ENCODE measurements at regions of chr1 and their contacts with region 1.

Region 1: DNA sequence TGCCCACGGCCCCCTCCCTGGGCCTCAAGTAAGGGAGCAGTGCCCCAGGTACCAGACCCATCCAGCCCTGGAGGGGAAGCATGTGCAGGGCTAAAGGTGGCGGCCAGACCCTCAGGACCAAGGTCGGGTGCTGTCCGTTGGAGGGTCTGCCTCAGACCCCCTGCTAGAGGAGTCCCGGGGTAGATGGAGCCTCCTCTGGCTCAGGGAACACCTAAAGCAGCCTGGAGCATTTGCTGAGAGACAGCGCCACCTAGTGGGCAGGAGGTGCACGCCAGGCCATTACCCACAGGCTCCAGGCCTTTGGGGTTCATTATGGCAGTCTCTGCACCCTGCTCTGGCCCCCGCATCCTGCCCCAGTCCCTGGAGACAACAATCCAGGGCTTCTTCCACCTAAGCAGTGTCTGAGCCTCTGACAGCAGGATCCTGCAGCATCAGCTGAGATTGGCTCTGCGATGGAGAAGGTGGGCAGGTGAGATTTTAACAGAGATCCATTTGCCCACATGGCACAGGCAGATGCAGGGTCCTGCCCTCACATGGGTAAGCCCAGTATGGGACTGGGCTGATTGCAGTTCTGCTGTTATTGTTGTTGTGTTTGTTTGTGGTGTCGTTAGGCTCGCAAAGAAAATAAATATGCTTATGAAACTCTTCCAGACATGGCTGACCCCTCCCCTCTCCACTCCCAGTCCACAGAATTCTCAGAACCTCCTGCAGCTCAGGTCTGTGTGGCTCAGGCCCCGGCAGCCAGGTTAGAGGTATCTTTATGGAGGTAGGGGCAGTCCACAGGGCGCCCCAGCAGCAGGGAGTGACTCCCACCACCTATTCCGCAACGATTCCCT is 42.4 kb downstream of the CTNNBIP1 start:
- DNase-seq: peak; percentile 79
- H3K4me3 Mint-ChIP-seq: no peak overlapping the region
- H3K27ac Mint-ChIP-seq: no peak overlapping the region
- H3K4me1 Mint-ChIP-seq: no peaks in the 10 kb centered on the region
- H3K27me3 Mint-ChIP-seq: no peaks in the 10 kb centered on the region

Region 2: DNA sequence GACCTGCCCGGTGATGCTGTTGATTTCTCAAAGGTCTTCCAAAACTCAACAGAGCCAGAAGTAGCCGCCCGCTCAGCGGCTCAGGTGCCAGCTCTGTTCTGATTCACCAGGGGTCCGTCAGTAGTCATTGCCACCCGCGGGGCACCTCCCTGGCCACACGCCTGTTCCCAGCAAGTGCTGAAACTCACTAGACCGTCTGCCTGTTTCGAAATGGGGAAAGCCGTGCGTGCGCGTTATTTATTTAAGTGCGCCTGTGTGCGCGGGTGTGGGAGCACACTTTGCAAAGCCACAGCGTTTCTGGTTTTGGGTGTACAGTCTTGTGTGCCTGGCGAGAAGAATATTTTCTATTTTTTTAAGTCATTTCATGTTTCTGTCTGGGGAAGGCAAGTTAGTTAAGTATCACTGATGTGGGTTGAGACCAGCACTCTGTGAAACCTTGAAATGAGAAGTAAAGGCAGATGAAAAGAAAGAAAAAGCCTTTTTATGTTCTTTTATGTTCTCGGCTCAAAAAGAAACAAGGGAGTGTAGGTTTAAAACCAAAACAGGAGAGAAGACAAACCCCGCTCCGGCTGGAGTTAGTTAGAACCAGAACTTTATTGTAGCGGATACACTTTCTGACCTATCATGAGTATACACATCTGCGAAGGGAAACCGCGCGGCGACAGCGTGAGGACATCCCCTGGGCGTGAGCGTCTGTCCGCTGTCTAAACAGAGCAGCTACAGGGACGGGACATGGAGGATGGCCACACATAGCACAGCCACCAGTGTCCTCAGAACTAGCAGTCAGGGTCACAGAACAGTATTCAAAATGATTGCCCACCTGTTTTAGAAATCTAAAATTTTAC is 139.0 kb before region 1 on chr1:
- intact Hi-C with region 1: loop called (anchors 1 kb)
- DNase-seq: peak; percentile 54
- H3K4me3 Mint-ChIP-seq: peak overlapping the region; percentile 72
- H3K27ac Mint-ChIP-seq: peak overlapping the region; percentile 83
- H3K4me1 Mint-ChIP-seq: peaks cover 56% of the 10 kb centered on the region
- H3K27me3 Mint-ChIP-seq: no peaks in the 10 kb centered on the region

Region 3: GRCh38 chr1:9784508-9785133 is 83.0 kb before region 1 on chr1:
- intact Hi-C with region 1: loop called (anchors 1 kb)
- DNase-seq: peak; percentile 50
- H3K4me3 Mint-ChIP-seq: no peak overlapping the region
- H3K27ac Mint-ChIP-seq: no peak overlapping the region
- H3K4me1 Mint-ChIP-seq: peaks cover 37% of the 10 kb centered on the region
- H3K27me3 Mint-ChIP-seq: no peaks in the 10 kb centered on the region